ENCODE measurements at regions of chr20 and their contacts with region 1.

Region 1: GRCh38 chr20:38631155-38632022 is 29.8 kb downstream of the ARHGAP40 start:
- DNase-seq: no peak
- ATAC-seq: no peak
- H3K4me3 ChIP-seq: no peak overlapping the region
- H3K27ac ChIP-seq: no peak overlapping the region
- H3K4me1 ChIP-seq: no peaks in the 10 kb centered on the region
- H3K27me3 ChIP-seq: no peaks in the 10 kb centered on the region
- CTCF ChIP-seq: no peak

Region 2: DNA sequence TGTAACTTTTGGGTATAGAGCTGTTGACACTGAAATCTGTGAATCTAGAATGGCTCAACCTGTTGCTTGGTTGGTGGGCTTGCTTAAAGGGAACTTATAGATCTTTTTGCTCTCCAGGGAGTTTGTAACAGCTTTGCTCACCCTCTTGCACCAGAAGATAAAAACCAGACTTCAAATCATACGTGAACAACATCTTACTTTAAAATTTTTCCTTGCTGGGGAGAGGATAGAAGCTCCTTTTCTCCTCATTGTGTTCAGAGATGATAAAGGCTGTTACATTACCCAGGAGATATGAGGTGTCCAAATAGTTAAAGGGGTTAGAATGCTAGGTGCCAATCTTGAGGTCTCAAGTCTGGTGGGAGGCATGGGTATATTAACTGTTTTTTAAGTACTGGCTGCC is 112.0 kb before region 1 on chr20:
- CTCF ChIA-PET with region 1: no interaction called
- POLR2A ChIA-PET with region 1: interaction called, 11 read pairs
- in situ Hi-C with region 1: no loop called
- intact Hi-C with region 1: no loop called
- DNase-seq: no peak
- ATAC-seq: no peak
- H3K4me3 ChIP-seq: no peak overlapping the region
- H3K27ac ChIP-seq: no peak overlapping the region
- H3K4me1 ChIP-seq: no peaks in the 10 kb centered on the region; the same call in 1 of the 2 replicates
- H3K27me3 ChIP-seq: no peaks in the 10 kb centered on the region
- CTCF ChIP-seq: no peak